Activated T-helper 2 cell treated with anti-CD3 and anti-CD28 coated beads, Interferon-gamma antibody, Interleukin-2, Interleukin-4, amounts not matched to agents 10 μg/mL and 5 μg/mL and 100 μg/mL, durations not matched to agents 14 hours and 24 hours and 36 hours (primary cell): ENCODE measurements at regions of chr12 and their contacts with region 1.

Region 1: GRCh38 chr12:27821259-27821973 is 41.4 kb upstream of the MANSC4 start:
- DNase-seq: no peak
- H3K4me3 Mint-ChIP-seq: no peak overlapping the region
- H3K27ac Mint-ChIP-seq: no peak overlapping the region
- H3K4me1 Mint-ChIP-seq: peaks cover 44% of the 10 kb centered on the region
- H3K27me3 Mint-ChIP-seq: peaks cover 36% of the 10 kb centered on the region

Region 2: GRCh38 chr12:27498149-27498548 is 323.3 kb before region 1 on chr12:
- intact Hi-C with region 1: loop called (anchors 1 kb)
- DNase-seq: peak; percentile 21
- H3K4me3 Mint-ChIP-seq: peak overlapping the region; percentile 15
- H3K27ac Mint-ChIP-seq: peak overlapping the region; percentile 90
- H3K4me1 Mint-ChIP-seq: peaks cover 60% of the 10 kb centered on the region
- H3K27me3 Mint-ChIP-seq: peaks cover 10% of the 10 kb centered on the region

Region 3: DNA sequence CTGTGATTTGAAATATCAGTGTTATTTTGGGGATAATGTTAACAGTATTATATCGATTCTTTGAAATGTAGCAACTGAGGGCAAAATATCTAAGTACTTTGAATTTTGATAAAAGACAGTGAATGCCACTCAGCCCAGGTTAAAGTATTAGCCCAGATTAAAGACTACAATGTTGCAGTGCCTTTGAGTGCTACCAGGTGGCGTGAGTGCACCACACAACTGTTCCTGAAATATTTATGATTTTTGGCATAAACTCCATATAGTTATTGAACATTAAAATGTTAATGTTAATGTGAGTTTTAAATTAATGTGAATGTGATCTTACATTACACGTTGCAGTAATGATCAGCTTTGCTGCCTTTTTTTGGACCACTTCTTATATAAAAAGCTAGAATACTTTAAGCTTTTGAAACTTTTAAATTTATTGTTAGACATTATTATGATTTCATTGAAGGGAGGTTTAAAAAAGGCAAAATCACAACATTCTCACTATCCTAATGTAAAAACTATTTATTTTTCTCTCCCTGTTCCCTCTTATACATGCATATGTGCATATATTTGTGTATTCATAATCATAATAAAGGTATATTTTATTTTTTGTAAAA is 88.3 kb before region 1 on chr12:
- intact Hi-C with region 1: loop called (anchors 1 kb)
- DNase-seq: no peak
- H3K4me3 Mint-ChIP-seq: no peak overlapping the region
- H3K27ac Mint-ChIP-seq: no peak overlapping the region
- H3K4me1 Mint-ChIP-seq: peaks cover 2% of the 10 kb centered on the region
- H3K27me3 Mint-ChIP-seq: no peaks in the 10 kb centered on the region

Region 4: DNA sequence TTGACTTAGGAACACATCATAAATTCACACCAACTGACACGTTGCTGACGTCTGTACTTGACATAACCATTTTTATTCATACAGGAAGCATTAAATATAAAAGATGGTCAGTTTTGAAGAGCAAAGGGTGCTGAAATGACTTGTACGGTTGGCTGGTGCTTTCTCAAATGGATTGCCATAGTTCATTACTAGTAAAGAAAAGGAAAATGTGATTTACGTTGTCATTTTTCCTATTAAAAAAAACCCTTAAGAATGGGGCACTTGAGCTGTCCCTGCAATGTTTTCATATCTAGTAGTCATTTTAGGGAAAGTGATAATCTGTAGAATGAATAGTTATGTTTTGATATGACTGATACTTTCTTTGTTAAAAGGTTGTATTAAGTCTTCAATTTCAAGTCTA is 18.9 kb before region 1 on chr12:
- intact Hi-C with region 1: loop called (anchors 1 kb)
- DNase-seq: no peak
- H3K4me3 Mint-ChIP-seq: no peak overlapping the region
- H3K27ac Mint-ChIP-seq: no peak overlapping the region
- H3K4me1 Mint-ChIP-seq: peaks cover 36% of the 10 kb centered on the region
- H3K27me3 Mint-ChIP-seq: peaks cover 17% of the 10 kb centered on the region

Region 5: DNA sequence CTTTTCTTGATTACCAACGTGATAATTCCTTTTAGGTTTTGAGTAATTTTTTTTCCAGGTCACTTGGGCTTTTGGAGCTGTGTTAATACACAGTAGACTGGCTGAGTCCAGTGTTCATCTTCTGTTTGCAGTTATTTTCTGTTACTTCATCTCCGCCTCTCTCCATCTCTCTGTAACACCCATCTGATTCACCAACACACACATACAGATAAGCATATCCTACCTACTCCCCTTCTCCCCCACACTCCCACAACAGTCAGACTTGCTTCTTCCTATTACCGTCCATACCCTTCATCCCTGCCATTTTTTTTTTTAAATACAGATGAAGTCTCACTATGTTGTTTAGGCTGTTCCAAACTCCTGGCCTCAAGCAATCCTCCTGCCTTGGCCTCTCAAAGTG is 31.3 kb after region 1 on chr12:
- intact Hi-C with region 1: no loop called
- DNase-seq: no peak
- H3K4me3 Mint-ChIP-seq: no peak overlapping the region
- H3K27ac Mint-ChIP-seq: no peak overlapping the region
- H3K4me1 Mint-ChIP-seq: no peaks in the 10 kb centered on the region
- H3K27me3 Mint-ChIP-seq: peaks cover 25% of the 10 kb centered on the region

Region 6: GRCh38 chr12:28190321-28191050 is 369.1 kb after region 1 on chr12 and contains the start of gene CCDC91:
- intact Hi-C with region 1: loop called (anchors 1 kb)
- DNase-seq: peak; percentile 77
- H3K4me3 Mint-ChIP-seq: peak within 1 kb of the TSS; percentile 91
- H3K27ac Mint-ChIP-seq: peak within 1 kb of the TSS; percentile 96
- H3K4me1 Mint-ChIP-seq: peaks cover 30% of the 10 kb centered on the region
- H3K27me3 Mint-ChIP-seq: no peaks in the 10 kb centered on the region
- total RNA-seq, gene CCDC91: 13.1 and 13.7 TPM in 2 replicates

Region 7: GRCh38 chr12:28552251-28552970 is 731.0 kb after region 1 on chr12:
- intact Hi-C with region 1: loop called (anchors 1 kb)
- DNase-seq: no peak
- H3K4me3 Mint-ChIP-seq: no peak overlapping the region
- H3K27ac Mint-ChIP-seq: peak overlapping the region; percentile 26
- H3K4me1 Mint-ChIP-seq: peaks cover 6% of the 10 kb centered on the region
- H3K27me3 Mint-ChIP-seq: peaks cover 1% of the 10 kb centered on the region